Caco-2 (cell line): ENCODE measurements at regions of chr16 and their contacts with region 1.

Region 1: DNA sequence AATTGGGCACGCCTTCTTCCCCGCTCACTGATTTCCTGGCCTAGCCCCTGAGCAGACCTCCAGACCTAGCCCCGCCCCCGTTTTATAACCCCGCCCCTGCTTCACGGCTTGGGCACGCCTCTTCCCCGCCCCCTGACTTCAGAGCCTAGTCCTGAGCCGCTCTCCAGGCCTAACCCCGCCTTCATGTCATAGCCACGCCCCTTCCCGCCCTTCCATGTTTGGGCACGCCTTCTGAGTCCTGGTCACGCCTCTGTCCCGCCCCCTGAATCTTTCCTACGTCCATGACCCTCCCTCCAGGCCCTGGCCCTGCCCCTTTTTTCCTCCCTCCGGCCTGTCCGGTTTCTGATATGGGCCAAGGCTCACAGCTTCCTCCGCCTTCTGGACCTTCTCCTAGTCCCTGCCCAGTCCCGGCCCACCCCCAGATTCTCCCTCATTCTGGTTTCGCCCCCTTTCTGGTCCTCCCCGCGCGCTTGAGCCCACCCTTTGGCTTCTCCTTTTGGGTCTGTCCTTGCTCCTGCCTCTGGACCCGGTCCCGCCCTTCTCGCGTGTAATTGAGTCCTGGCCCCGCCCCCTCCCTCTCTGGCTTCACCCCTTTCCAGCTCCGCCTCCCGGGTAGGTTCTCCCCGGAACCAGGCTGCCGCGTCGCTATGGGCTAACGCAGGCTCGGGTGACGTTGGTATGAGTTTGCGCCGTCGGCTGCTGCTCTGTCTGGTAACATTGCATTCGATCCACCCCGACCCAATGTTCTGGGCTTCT is 15.1 kb upstream of the EEF2K start:
- DNase-seq: peak; percentile 98 to 99
- H3K4me3 ChIP-seq: peak overlapping the region; percentile 45
- H3K4me3 Mint-ChIP-seq: peak overlapping the region; percentile 97
- H3K27ac Mint-ChIP-seq: peak overlapping the region; percentile 98
- H3K4me1 ChIP-seq: peaks cover 8% of the 10 kb centered on the region; the same call in 1 of the 2 replicates
- H3K4me1 Mint-ChIP-seq: peaks cover 7% of the 10 kb centered on the region
- H3K27me3 ChIP-seq: no peaks in the 10 kb centered on the region
- H3K27me3 Mint-ChIP-seq: peaks cover 3% of the 10 kb centered on the region
- CTCF ChIP-seq: no peak

Region 2: DNA sequence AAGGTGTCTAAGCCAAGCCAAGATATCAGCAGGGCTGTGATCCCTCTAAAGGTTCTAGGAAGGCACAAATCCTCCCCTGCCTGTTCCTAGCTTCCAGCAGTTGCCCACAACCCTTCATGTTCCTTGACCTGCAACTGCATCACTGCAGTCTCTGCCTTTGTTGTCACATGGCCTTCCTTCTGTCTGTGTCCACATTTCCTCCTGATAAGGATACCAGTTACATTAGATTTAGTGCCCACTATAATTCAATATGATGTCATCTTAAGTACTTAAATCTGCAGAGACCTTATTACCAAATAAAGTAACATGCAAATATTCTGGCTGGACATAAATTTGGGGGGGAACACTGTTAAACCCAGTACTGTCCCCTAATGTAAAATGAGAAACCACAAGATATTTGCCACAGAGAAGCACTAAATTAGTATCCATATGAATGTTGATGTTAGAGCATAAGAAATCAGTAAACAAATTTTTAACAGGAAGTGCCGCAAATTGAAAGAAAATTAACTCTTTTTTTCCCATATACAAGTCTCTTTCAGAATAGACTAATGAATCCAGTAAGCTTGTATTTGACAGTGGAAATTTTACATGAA is 233.1 kb before region 1 on chr16:
- CTCF ChIA-PET with region 1: no interaction called
- POLR2A ChIA-PET with region 1: no interaction called
- intact Hi-C with region 1: no loop called
- DNase-seq: no peak
- H3K4me3 ChIP-seq: no peak overlapping the region
- H3K4me3 Mint-ChIP-seq: no peak overlapping the region
- H3K27ac Mint-ChIP-seq: no peak overlapping the region
- H3K4me1 ChIP-seq: 0 out of 2 replicates have a peak, but pooled peaks cover 3% of the 10 kb centered on the region
- H3K4me1 Mint-ChIP-seq: no peaks in the 10 kb centered on the region
- H3K27me3 ChIP-seq: no peaks in the 10 kb centered on the region
- H3K27me3 Mint-ChIP-seq: no peaks in the 10 kb centered on the region
- CTCF ChIP-seq: no peak

Region 3: DNA sequence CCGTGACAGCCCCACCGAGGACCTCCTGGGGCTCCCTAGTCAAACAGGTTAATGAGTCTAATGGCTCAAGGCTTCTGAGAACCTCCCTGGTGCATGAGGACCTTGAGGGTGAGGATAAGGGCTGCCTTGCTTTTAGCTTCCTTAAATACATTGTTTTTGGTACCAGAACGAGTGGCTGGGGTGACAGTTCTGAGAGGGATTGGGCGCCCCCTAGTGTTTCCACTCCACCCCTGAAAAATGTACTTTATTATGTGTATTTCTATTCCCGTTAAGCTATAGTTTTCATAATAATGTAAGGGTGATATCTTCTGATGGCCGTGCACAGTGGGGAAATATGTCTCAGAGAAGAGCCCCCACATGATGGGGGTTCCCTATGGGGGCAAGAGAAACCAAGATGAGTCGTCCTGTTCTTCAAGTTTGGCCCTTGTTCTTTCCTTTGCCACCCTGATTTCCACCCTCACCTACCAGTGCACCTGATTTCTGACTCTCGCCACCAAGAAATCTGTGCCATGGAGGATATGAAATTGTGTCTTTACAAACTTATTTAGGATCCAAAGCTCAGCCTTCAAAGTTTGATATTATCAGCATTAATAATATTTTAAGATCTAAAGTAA is 113.1 kb before region 1 on chr16:
- CTCF ChIA-PET with region 1: interaction called, 35 read pairs
- POLR2A ChIA-PET with region 1: no interaction called
- intact Hi-C with region 1: loop called (anchors 1 kb)
- DNase-seq: peak; percentile 49 to 70
- H3K4me3 ChIP-seq: no peak overlapping the region
- H3K4me3 Mint-ChIP-seq: no peak overlapping the region
- H3K27ac Mint-ChIP-seq: no peak overlapping the region
- H3K4me1 ChIP-seq: no peaks in the 10 kb centered on the region
- H3K4me1 Mint-ChIP-seq: no peaks in the 10 kb centered on the region
- H3K27me3 ChIP-seq: no peaks in the 10 kb centered on the region
- H3K27me3 Mint-ChIP-seq: no peaks in the 10 kb centered on the region
- CTCF ChIP-seq: peak; percentile 81 to 83

Region 4: GRCh38 chr16:22123146-22123545 is 67.8 kb before region 1 on chr16:
- CTCF ChIA-PET with region 1: interaction called, 13 read pairs
- POLR2A ChIA-PET with region 1: no interaction called
- intact Hi-C with region 1: loop called (anchors 5 kb)
- DNase-seq: no peak
- H3K4me3 ChIP-seq: no peak overlapping the region
- H3K4me3 Mint-ChIP-seq: no peak overlapping the region
- H3K27ac Mint-ChIP-seq: no peak overlapping the region
- H3K4me1 ChIP-seq: no peaks in the 10 kb centered on the region
- H3K4me1 Mint-ChIP-seq: no peaks in the 10 kb centered on the region
- H3K27me3 ChIP-seq: no peaks in the 10 kb centered on the region
- H3K27me3 Mint-ChIP-seq: peaks cover 9% of the 10 kb centered on the region
- CTCF ChIP-seq: no peak

Region 5: DNA sequence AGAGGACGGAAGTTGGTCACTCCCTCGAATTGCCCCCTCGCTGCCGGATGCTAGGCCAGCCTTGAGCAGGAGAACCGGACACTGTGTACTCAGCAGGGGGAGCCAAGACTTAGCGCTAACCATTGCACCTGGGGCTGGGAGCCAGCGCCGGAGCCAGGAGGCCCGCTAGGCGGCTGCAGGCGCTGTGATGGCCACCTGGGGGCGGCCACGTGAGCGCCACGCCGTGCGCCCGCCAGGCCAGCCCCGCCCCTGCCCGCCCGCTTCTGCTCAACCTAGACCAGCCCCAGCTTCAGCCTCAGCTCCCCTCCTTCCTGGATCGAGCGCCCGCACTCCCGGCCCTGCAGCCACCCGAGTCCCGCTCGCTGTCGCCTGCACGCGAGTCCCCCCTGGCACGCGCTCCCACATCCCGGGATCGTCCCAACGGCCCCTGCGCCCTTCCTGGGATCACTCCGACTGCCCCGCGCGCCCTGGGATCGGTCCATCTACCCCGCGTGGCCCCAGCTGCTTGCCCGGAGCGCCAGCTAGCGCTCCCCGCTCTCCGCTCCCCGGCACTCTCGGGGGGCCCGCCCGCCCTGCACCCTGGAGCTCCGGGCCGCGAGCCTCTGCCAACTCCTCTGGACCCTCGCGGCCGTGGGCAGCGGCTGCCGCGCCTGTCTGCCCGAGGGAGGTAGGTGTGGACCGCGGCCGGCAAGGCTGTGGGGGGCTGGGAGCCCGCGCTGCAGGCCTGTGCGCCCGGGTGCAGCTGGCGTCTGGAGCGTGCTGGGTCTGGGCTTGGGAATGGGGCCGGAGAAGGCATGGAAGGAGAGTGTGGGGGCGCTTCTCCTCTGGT is 15.3 kb after region 1 on chr16 and contains the start of gene EEF2K:
- CTCF ChIA-PET with region 1: interaction called, 9 read pairs
- POLR2A ChIA-PET with region 1: interaction called, 5 read pairs
- intact Hi-C with region 1: loop called (anchors 2 kb)
- DNase-seq: peak; percentile 94 to 95
- H3K4me3 ChIP-seq: peak within 1 kb of the TSS; percentile 91
- H3K4me3 Mint-ChIP-seq: peak within 1 kb of the TSS; percentile 99
- H3K27ac Mint-ChIP-seq: peak within 1 kb of the TSS; percentile 54
- H3K4me1 ChIP-seq: 0 out of 2 replicates have a peak, but pooled peaks cover 7% of the 10 kb centered on the region
- H3K4me1 Mint-ChIP-seq: peaks cover 7% of the 10 kb centered on the region
- H3K27me3 ChIP-seq: no peaks in the 10 kb centered on the region
- H3K27me3 Mint-ChIP-seq: no peaks in the 10 kb centered on the region
- CTCF ChIP-seq: peak; percentile 71 to 74
- total RNA-seq, gene EEF2K: 17.5 and 20.1 TPM in 2 replicates

Region 6: GRCh38 chr16:22232277-22233042 is 41.5 kb after region 1 on chr16:
- CTCF ChIA-PET with region 1: no interaction called
- POLR2A ChIA-PET with region 1: no interaction called
- intact Hi-C with region 1: no loop called
- DNase-seq: peak; percentile 21 to 54
- H3K4me3 ChIP-seq: no peak overlapping the region
- H3K4me3 Mint-ChIP-seq: no peak overlapping the region
- H3K27ac Mint-ChIP-seq: no peak overlapping the region
- H3K4me1 ChIP-seq: 0 out of 2 replicates have a peak, but pooled peaks cover 6% of the 10 kb centered on the region
- H3K4me1 Mint-ChIP-seq: no peaks in the 10 kb centered on the region
- H3K27me3 ChIP-seq: no peaks in the 10 kb centered on the region
- H3K27me3 Mint-ChIP-seq: no peaks in the 10 kb centered on the region
- CTCF ChIP-seq: no peak

Region 7: DNA sequence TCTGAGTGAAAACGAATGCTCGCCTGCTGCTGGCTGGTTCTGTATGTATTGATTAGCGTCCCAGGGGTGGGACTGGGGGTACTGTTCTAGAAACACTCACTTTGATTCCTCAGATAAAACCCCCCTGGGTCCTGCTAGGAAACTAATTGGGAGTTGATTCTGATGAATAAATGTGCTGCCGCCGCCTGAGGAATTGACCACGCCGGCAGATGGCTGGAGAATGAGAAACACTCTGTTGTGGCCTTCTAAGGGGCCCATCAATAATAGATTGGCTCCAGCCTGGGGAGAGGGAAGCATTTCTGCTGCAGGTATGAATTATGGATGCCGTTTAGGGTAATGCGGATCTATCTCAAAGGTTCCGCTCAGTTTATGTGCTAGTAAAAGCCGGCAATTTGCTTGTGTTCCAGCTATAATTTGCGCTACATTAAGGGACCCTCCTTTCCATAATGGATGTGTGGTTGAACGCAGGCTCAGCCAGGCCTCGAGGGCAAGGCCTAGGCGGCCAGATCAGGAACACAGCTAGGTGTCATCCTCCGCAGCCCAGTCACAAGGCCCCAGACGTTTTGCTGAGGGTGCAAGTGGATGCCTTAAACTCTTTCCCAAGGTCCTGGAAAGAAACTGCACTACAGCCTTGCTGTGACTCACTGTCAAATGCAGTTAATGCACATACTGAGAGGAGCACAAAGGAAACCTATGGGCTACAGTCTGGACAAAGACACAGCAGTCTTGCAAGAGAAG is 490.8 kb after region 1 on chr16:
- CTCF ChIA-PET with region 1: no interaction called
- POLR2A ChIA-PET with region 1: no interaction called
- intact Hi-C with region 1: no loop called
- DNase-seq: no peak
- H3K4me3 ChIP-seq: no peak overlapping the region
- H3K4me3 Mint-ChIP-seq: no peak overlapping the region
- H3K27ac Mint-ChIP-seq: no peak overlapping the region
- H3K4me1 ChIP-seq: 0 out of 2 replicates have a peak, but pooled peaks cover 5% of the 10 kb centered on the region
- H3K4me1 Mint-ChIP-seq: no peaks in the 10 kb centered on the region
- H3K27me3 ChIP-seq: no peaks in the 10 kb centered on the region; the same call in 1 of the 2 replicates
- H3K27me3 Mint-ChIP-seq: no peaks in the 10 kb centered on the region
- CTCF ChIP-seq: no peak